CD8-positive, alpha-beta T cell (primary cell): ENCODE measurements at regions of chr13 and their contacts with region 1.

Region 1: GRCh38 chr13:79405829-79406596 is at the start of gene RBM26:
- DNase-seq: peak; percentile 86 to 98 (median 93)
- ATAC-seq: peak; percentile 89
- H3K4me3 ChIP-seq: peak within 1 kb of the TSS; percentile 84 to 89
- H3K4me3 Mint-ChIP-seq: peak within 1 kb of the TSS; percentile 96
- H3K27ac ChIP-seq: peak within 1 kb of the TSS; percentile 89 to 92
- H3K27ac Mint-ChIP-seq: peak within 1 kb of the TSS; percentile 99
- H3K4me1 ChIP-seq: peaks cover 56% of the 10 kb centered on the region
- H3K4me1 Mint-ChIP-seq: peaks cover 30% of the 10 kb centered on the region
- H3K27me3 ChIP-seq: no peaks in the 10 kb centered on the region
- H3K27me3 Mint-ChIP-seq: no peaks in the 10 kb centered on the region
- CTCF ChIP-seq: peak; percentile 24
- total RNA-seq, gene RBM26: 55.7 to 61.1 TPM

Region 2: GRCh38 chr13:79393564-79394249 is 12.3 kb before region 1 on chr13:
- CTCF ChIA-PET with region 1: interaction called, 53 read pairs
- POLR2A ChIA-PET with region 1: interaction called, 26 read pairs
- intact Hi-C with region 1: loop called (anchors 1 kb)
- DNase-seq: peak in 8 of 9 experiments; percentile 21 to 83 (median 60)
- ATAC-seq: peak; percentile 66
- H3K4me3 ChIP-seq: peak overlapping the region; percentile 15 to 59
- H3K4me3 Mint-ChIP-seq: peak overlapping the region; percentile 84
- H3K27ac ChIP-seq: peak overlapping the region; percentile 42 to 49
- H3K27ac Mint-ChIP-seq: peak overlapping the region; percentile 95
- H3K4me1 ChIP-seq: peaks cover 58% of the 10 kb centered on the region
- H3K4me1 Mint-ChIP-seq: peaks cover 69% of the 10 kb centered on the region
- H3K27me3 ChIP-seq: no peaks in the 10 kb centered on the region
- H3K27me3 Mint-ChIP-seq: no peaks in the 10 kb centered on the region
- CTCF ChIP-seq: no peak

Region 3: GRCh38 chr13:79451500-79451962 is 45.5 kb after region 1 on chr13:
- CTCF ChIA-PET with region 1: no interaction called
- POLR2A ChIA-PET with region 1: no interaction called
- intact Hi-C with region 1: loop called in 1 of 2 experiments (anchors 1 kb)
- DNase-seq: peak; percentile 60 to 93 (median 83)
- ATAC-seq: peak; percentile 99
- H3K4me3 ChIP-seq: no peak overlapping the region
- H3K4me3 Mint-ChIP-seq: peak overlapping the region; percentile 6
- H3K27ac ChIP-seq: peak overlapping the region in 1 of 2 experiments; percentile 22
- H3K27ac Mint-ChIP-seq: peak overlapping the region; percentile 88
- H3K4me1 ChIP-seq: peaks cover 26% of the 10 kb centered on the region
- H3K4me1 Mint-ChIP-seq: peaks cover 34% of the 10 kb centered on the region
- H3K27me3 ChIP-seq: no peaks in the 10 kb centered on the region
- H3K27me3 Mint-ChIP-seq: no peaks in the 10 kb centered on the region
- CTCF ChIP-seq: no peak